CD8-positive, alpha-beta T cell (primary cell): ENCODE measurements at regions of chr17 and their contacts with region 1.

Region 1: DNA sequence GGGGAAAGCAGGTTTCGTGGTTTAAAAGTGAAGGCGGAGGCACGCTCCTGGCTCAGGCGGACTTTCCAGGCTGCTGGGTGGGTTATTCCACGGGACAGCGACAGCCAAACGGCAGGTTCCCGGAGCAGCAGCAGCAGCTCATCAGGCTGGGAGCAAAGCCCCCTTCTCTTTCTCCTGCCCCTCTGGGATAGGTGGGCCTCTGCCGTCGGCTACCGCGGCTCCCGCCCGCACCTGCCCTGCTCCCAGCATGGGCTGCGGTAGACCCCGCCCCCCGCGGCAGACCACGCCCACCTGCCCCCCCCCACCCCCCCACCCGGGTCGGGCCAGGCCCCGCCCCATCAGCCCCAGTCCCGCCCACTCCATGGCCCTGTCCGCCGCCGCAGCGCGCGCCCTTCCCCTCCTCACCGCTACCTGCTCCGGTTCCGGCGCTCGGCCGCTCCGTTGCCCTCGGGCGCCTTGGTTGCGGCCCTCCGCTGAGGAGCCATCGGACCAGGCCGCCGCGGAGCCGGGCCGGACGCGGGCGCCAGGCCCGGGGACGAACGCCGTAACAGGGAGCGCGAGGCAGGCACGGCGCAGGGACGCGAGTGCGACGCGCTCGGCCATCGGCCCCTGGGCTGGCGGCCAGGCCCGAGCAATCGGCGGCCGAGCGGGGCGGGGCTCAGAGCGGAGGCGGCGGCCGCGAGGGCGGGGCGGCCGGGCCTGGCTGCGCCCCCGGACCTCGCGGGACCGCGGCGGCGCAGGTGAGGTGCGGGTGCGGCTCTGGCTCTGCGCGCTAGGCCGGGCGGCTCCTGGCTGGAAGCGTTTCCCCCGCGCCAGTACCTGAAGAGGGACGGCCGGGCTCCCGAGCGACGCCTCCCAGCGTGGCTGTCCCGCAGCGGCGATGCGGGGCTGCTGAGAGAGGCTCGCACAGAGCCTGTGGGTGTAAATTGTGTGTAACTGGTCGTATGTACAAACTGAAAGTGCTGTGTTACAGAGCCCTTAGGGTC is at the starts of genes HEXD and OGFOD3:
- DNase-seq: peak; percentile 72 to 94 (median 85)
- ATAC-seq: peak; percentile 85
- H3K4me3 ChIP-seq: peak within 1 kb of the TSS; percentile 81 to 88
- H3K4me3 Mint-ChIP-seq: peak within 1 kb of the TSS; percentile 85
- H3K27ac ChIP-seq: peak within 1 kb of the TSS; percentile 63 to 75
- H3K27ac Mint-ChIP-seq: peak within 1 kb of the TSS; percentile 64
- H3K4me1 ChIP-seq: peaks cover 29% of the 10 kb centered on the region
- H3K4me1 Mint-ChIP-seq: peaks cover 29% of the 10 kb centered on the region
- H3K27me3 ChIP-seq: no peaks in the 10 kb centered on the region
- H3K27me3 Mint-ChIP-seq: no peaks in the 10 kb centered on the region
- CTCF ChIP-seq: no peak
- total RNA-seq, gene HEXD: 24.6 to 25.0 TPM
- total RNA-seq, gene OGFOD3: 11.4 to 14.1 TPM

Region 2: DNA sequence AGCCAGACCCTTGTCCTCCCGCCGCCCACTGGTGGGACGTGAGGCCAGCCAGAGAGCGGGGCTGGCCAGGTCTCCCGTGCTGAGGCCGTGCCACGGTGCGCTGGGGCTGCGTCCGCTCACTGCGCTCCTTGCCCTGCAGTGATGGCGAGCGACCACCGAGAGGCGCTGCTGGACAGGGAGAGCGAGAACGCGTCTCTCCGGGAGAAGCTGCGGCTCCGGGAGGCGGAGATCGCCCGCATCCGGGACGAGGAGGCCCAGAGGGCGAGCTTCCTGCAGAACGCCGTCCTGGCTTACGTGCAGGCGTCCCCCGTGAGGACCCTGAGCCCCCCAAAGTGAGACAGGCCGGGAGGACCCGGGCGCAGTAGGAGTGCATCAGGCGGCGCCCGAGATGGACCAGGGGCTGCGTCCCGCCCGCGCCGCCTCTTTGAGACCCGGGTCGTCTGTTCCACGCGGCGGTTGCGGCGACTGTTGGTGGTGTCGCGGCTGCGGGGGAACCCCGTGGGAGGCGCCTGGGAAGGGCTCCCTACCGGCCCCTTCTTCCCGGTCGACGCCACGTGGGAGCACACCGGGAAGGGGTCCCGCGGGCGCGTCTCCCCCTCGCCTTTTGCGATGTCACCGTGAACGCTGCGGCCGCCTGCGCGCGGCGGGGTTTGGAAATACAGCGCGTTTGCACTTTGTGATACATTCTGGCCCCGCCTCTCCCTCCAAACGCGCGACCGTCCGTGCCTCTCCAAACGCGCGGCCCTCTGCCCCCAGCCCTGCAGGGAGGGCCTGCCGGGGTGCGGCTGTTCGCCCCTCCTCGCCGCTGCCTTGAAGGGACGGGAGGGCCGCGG is 387.6 kb before region 1 on chr17:
- CTCF ChIA-PET with region 1: no interaction called
- POLR2A ChIA-PET with region 1: no interaction called
- intact Hi-C with region 1: loop called in 1 of 2 experiments (anchors 1 kb)
- DNase-seq: peak; percentile 66 to 90 (median 81)
- ATAC-seq: peak; percentile 92
- H3K4me3 ChIP-seq: peak overlapping the region; percentile 49 to 59
- H3K4me3 Mint-ChIP-seq: peak overlapping the region; percentile 82
- H3K27ac ChIP-seq: no peak overlapping the region
- H3K27ac Mint-ChIP-seq: no peak overlapping the region
- H3K4me1 ChIP-seq: peaks cover 19% of the 10 kb centered on the region
- H3K4me1 Mint-ChIP-seq: peaks cover 14% of the 10 kb centered on the region
- H3K27me3 ChIP-seq: no peaks in the 10 kb centered on the region
- H3K27me3 Mint-ChIP-seq: no peaks in the 10 kb centered on the region
- CTCF ChIP-seq: peak; percentile 87

Region 3: DNA sequence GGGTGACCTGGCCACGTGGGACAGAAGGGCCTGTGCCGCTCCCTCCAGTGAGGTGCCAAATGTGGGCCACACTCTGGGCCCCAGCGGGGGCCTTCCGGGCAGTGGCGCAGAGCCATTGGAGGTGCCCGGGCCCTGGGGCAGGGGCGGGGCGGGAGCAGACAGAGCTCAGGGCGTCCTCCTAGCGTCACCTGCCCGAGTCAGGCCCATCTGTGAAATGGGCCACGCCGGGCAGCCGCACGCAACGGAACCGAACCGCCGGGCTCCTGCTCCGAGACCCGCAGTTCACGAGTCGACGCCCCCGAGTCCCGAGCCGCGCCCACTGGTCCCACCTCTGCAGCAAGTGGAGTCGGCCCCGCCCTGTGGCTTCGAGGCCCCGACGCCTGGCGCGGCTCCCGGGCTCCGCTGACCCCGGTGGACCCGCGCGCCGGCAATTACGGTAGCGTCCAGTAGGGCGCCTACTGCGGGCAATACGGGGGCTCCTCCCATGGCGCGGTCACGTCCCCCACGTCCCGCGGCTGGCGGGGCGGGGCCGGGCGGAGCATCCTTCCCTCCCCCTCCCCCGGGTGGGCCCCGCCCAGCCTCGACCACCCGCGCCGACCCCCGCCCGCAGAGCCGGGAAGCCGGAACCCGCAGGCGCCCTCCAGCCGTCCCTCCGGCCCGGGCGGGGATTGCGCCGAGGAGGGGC is 187.5 kb before region 1 on chr17:
- CTCF ChIA-PET with region 1: interaction called, 3 read pairs
- POLR2A ChIA-PET with region 1: no interaction called
- intact Hi-C with region 1: loop called in 1 of 2 experiments (anchors 10 kb)
- DNase-seq: peak in 6 of 9 experiments; percentile 54 to 79 (median 69)
- ATAC-seq: peak; percentile 32
- H3K4me3 ChIP-seq: peak overlapping the region; percentile 39 to 44
- H3K4me3 Mint-ChIP-seq: peak overlapping the region; percentile 82
- H3K27ac ChIP-seq: peak overlapping the region in 1 of 2 experiments; percentile 66
- H3K27ac Mint-ChIP-seq: no peak overlapping the region
- H3K4me1 ChIP-seq: peaks cover 42% of the 10 kb centered on the region
- H3K4me1 Mint-ChIP-seq: peaks cover 14% of the 10 kb centered on the region
- H3K27me3 ChIP-seq: no peaks in the 10 kb centered on the region
- H3K27me3 Mint-ChIP-seq: no peaks in the 10 kb centered on the region
- CTCF ChIP-seq: no peak

Region 4: DNA sequence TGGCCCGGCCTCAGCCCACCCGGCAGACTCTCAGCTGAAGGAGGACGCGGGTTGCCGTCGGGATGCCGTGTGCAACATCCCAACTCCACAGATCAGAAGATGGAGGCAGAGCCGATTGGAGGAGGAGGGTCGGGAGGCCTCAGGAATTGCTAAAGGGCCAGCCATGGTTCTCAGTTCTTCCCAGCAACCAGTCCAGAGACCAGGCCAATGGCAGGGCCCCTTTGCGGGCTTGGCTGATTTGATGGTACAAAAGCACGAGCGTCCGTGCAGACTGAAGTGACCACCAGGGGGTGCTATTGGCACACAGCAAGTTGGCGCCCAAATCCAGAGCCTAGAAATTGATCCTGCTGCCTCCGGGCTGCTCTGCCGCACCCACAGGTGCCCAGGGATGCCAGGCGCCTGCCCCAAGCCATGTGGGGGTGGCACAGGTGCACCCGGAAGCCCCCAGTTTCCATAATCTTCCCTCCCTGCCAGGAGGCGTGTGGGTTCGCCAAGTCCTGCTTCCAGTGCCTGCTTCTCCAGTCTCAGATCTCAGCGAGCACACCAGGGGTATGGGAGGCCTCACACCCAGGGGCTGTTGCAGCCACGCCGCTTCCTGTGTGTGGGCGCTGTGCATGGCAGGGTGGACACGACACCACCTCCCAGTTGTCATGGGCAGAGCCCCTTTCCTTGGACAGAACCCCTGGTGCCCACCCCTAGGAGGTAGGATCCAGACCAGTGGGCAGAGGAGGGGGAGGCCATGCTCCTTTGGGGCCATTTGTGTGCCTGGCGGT is 66.4 kb before region 1 on chr17:
- CTCF ChIA-PET with region 1: interaction called, 26 read pairs
- POLR2A ChIA-PET with region 1: interaction called, 3 read pairs
- intact Hi-C with region 1: loop called (anchors 1 kb)
- DNase-seq: peak; percentile 54 to 89 (median 82)
- ATAC-seq: peak; percentile 90
- H3K4me3 ChIP-seq: no peak overlapping the region
- H3K4me3 Mint-ChIP-seq: no peak overlapping the region
- H3K27ac ChIP-seq: no peak overlapping the region
- H3K27ac Mint-ChIP-seq: no peak overlapping the region
- H3K4me1 ChIP-seq: no peaks in the 10 kb centered on the region
- H3K4me1 Mint-ChIP-seq: no peaks in the 10 kb centered on the region
- H3K27me3 ChIP-seq: peaks cover 0 to under 1% of the 10 kb centered on the region in 2 experiments
- H3K27me3 Mint-ChIP-seq: peaks cover 11% of the 10 kb centered on the region
- CTCF ChIP-seq: peak; percentile 93

Region 5: DNA sequence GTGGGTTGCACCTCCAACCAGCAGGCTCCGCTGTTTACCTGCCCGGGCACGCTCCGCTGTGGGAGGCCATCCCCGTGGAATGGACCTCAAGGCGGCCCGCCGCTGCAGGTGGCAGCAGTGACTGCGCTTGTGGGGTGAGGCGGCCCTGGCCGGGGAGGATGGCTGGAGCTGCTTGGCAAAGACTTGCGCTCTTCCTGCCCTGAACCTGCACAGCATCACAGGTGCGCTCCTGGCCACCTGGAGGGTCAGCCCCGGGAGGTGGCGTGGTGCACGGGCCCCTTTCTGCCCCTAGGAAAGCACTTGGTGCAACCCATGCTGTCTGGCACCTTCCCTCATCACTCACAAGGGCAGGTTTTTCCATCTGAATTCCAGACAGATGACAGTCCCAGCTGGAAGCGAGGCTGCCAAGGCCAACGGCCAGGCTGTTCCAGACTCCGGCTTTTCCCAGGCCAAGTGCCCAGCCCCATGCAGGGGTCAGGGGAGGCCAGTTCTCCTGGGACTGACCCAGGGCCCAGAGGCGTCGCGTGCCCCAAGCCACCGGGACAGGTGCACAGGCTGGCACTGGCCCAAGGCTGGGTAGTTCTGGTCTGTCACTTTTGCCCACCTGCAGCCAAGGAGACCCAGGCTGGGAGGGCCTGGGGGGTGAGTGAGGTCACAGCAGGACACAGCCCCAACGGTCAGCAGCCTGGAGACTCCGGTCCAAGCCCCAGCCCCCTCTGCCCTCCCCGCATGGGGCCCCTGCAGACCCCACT is 33.4 kb before region 1 on chr17:
- CTCF ChIA-PET with region 1: no interaction called
- POLR2A ChIA-PET with region 1: no interaction called
- intact Hi-C with region 1: no loop called
- DNase-seq: no peak
- ATAC-seq: no peak
- H3K4me3 ChIP-seq: no peak overlapping the region
- H3K4me3 Mint-ChIP-seq: no peak overlapping the region
- H3K27ac ChIP-seq: no peak overlapping the region
- H3K27ac Mint-ChIP-seq: no peak overlapping the region
- H3K4me1 ChIP-seq: no peaks in the 10 kb centered on the region
- H3K4me1 Mint-ChIP-seq: peaks cover 3% of the 10 kb centered on the region
- H3K27me3 ChIP-seq: peaks cover 0 to 3% of the 10 kb centered on the region in 2 experiments
- H3K27me3 Mint-ChIP-seq: peaks cover 20% of the 10 kb centered on the region
- CTCF ChIP-seq: no peak

Region 6: GRCh38 chr17:82457997-82458864 is 39.9 kb after region 1 on chr17 and contains the start of gene NARF:
- CTCF ChIA-PET with region 1: no interaction called
- POLR2A ChIA-PET with region 1: interaction called, 6 read pairs
- intact Hi-C with region 1: loop called (anchors 1 kb)
- DNase-seq: peak; percentile 89 to 98 (median 95)
- ATAC-seq: peak; percentile 97
- H3K4me3 ChIP-seq: peak within 1 kb of the TSS; percentile 67 to 76
- H3K4me3 Mint-ChIP-seq: peak within 1 kb of the TSS; percentile 87
- H3K27ac ChIP-seq: peak within 1 kb of the TSS; percentile 96 to 97
- H3K27ac Mint-ChIP-seq: peak within 1 kb of the TSS; percentile 97
- H3K4me1 ChIP-seq: peaks cover 17% of the 10 kb centered on the region
- H3K4me1 Mint-ChIP-seq: peaks cover 29% of the 10 kb centered on the region
- H3K27me3 ChIP-seq: no peaks in the 10 kb centered on the region
- H3K27me3 Mint-ChIP-seq: no peaks in the 10 kb centered on the region
- CTCF ChIP-seq: no peak
- total RNA-seq, gene NARF: 60.0 to 60.1 TPM

Region 7: GRCh38 chr17:82483836-82484235 is 65.5 kb after region 1 on chr17:
- CTCF ChIA-PET with region 1: no interaction called
- POLR2A ChIA-PET with region 1: no interaction called
- intact Hi-C with region 1: no loop called
- DNase-seq: no peak
- ATAC-seq: no peak
- H3K4me3 ChIP-seq: no peak overlapping the region
- H3K4me3 Mint-ChIP-seq: no peak overlapping the region
- H3K27ac ChIP-seq: no peak overlapping the region
- H3K27ac Mint-ChIP-seq: no peak overlapping the region
- H3K4me1 ChIP-seq: no peaks in the 10 kb centered on the region
- H3K4me1 Mint-ChIP-seq: peaks cover 10% of the 10 kb centered on the region
- H3K27me3 ChIP-seq: no peaks in the 10 kb centered on the region
- H3K27me3 Mint-ChIP-seq: no peaks in the 10 kb centered on the region
- CTCF ChIP-seq: no peak

Region 8: GRCh38 chr17:82518826-82519810 is 100.8 kb after region 1 on chr17 and contains the start of gene FOXK2:
- CTCF ChIA-PET with region 1: no interaction called
- POLR2A ChIA-PET with region 1: interaction called, 3 read pairs
- intact Hi-C with region 1: loop called in 1 of 2 experiments (anchors 1 kb)
- DNase-seq: peak; percentile 86 to 98 (median 92)
- ATAC-seq: peak; percentile 98
- H3K4me3 ChIP-seq: peak within 1 kb of the TSS; percentile 56 to 84
- H3K4me3 Mint-ChIP-seq: peak within 1 kb of the TSS; percentile 86
- H3K27ac ChIP-seq: peak within 1 kb of the TSS; percentile 84 to 85
- H3K27ac Mint-ChIP-seq: peak within 1 kb of the TSS; percentile 89
- H3K4me1 ChIP-seq: peaks cover 17% of the 10 kb centered on the region
- H3K4me1 Mint-ChIP-seq: peaks cover 31% of the 10 kb centered on the region
- H3K27me3 ChIP-seq: no peaks in the 10 kb centered on the region
- H3K27me3 Mint-ChIP-seq: no peaks in the 10 kb centered on the region
- CTCF ChIP-seq: no peak
- total RNA-seq, gene FOXK2: 36.1 to 37.7 TPM

Region 9: DNA sequence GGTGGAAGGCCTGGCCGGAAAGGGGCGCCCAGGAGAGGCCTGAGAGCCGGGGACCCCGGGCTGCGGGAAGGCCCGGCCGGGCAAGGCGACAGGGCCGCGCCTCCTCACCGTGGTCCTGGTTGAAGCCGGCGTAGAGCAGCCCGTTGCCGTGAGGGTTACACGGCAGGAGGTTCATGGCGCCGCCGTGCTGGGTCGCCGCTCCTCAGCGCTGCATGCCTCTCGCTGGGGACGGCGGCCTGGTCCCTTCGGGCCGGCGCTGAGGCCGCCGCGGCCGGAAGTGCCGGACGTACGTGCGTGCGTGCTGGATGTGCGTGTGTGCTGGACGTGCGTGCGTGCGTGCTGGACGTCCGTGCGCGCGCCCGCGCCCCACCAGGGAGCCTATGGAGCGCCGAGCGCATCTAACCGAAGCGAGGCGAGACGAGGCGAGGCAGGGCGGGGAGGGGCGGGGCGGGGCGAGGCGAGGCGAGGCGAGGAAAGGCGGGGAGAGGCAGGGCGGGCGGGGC is 229.9 kb after region 1 on chr17 and contains the start of gene WDR45B:
- CTCF ChIA-PET with region 1: no interaction called
- POLR2A ChIA-PET with region 1: no interaction called
- intact Hi-C with region 1: loop called in 1 of 2 experiments (anchors 5 kb)
- DNase-seq: peak; percentile 76 to 96 (median 87)
- ATAC-seq: peak; percentile 83
- H3K4me3 ChIP-seq: peak within 1 kb of the TSS; percentile 61 to 96
- H3K4me3 Mint-ChIP-seq: peak within 1 kb of the TSS; percentile 89
- H3K27ac ChIP-seq: peak within 1 kb of the TSS; percentile 91 to 95
- H3K27ac Mint-ChIP-seq: peak within 1 kb of the TSS; percentile 91
- H3K4me1 ChIP-seq: peaks cover 21% of the 10 kb centered on the region
- H3K4me1 Mint-ChIP-seq: peaks cover 31% of the 10 kb centered on the region
- H3K27me3 ChIP-seq: no peaks in the 10 kb centered on the region
- H3K27me3 Mint-ChIP-seq: no peaks in the 10 kb centered on the region
- CTCF ChIP-seq: no peak
- total RNA-seq, gene WDR45B: 103 to 107 TPM